Naive thymus-derived CD4-positive, alpha-beta T cell (primary cell): ENCODE measurements at regions of chr22 and their contacts with region 1.

Region 1: GRCh38 chr22:39446295-39446721 is 10.5 kb upstream of the MGAT3 start:
- DNase-seq: no peak
- ATAC-seq: peak; percentile 15
- H3K4me3 ChIP-seq: no peak overlapping the region
- H3K4me3 Mint-ChIP-seq: peak overlapping the region in 7 of 10 donors; percentile 23 to 80 (median 69)
- H3K27ac ChIP-seq: no peak overlapping the region
- H3K27ac Mint-ChIP-seq: peak overlapping the region in 4 of 9 donors; percentile 57 to 87 (median 78)
- H3K4me1 ChIP-seq: peaks cover 5 to 35% of the 10 kb centered on the region in 2 donors
- H3K4me1 Mint-ChIP-seq: peaks cover 17 to 33% (median 24%) of the 10 kb centered on the region in 7 donors
- H3K27me3 ChIP-seq: no peaks in the 10 kb centered on the region
- H3K27me3 Mint-ChIP-seq: no peaks in the 10 kb centered on the region

Region 2: DNA sequence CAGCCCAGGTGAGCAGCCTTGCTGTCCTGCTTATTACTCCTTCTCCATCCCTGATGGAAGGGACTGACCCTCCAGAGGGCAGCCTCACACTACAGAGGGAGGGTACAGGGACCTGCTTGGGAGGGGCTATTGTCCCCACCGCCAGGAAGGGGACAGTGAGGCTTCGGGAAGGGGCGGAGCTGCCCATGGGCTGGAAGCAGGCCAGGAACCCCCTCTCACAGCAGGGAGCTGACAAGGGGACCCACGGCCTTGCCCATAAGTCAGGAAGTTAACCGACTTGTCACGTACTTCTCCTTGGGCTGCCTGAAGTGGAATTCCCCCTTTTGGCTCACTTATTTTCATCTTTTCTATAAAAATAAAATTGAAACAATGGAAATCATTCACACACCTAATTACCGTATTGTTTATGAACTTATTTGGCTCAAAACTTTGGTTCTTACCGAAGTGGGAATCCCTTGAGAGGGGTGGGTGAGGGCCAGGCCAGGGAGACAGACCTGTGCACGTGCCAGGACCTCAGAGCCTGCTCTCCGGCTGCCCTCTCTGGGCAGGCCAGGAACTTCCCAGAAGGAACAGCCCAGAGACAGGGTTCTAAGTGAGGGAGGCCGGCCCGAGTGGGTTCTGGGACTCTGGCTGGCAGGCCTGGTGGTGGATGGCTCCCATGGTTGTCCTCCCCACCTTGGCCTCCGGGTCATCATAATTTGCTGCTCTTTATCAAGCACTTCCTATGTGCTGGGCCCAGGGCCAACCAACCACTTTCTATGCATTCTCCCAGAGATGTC is 16.3 kb after region 1 on chr22:
- CTCF ChIA-PET with region 1: no interaction called
- POLR2A ChIA-PET with region 1: interaction called, 3 read pairs
- intact Hi-C with region 1: loop called in 1 of 2 experiments (anchors 1 kb)
- DNase-seq: no peak
- ATAC-seq: peak; percentile 26
- H3K4me3 ChIP-seq: no peak overlapping the region
- H3K4me3 Mint-ChIP-seq: peak overlapping the region in 1 of 10 donors; percentile 32
- H3K27ac ChIP-seq: no peak overlapping the region
- H3K27ac Mint-ChIP-seq: peak overlapping the region in 1 of 9 donors; percentile 1
- H3K4me1 ChIP-seq: peaks cover 0 to 9% of the 10 kb centered on the region in 2 donors
- H3K4me1 Mint-ChIP-seq: peaks cover 6 to 17% (median 10%) of the 10 kb centered on the region in 7 donors
- H3K27me3 ChIP-seq: peaks cover 0 to 11% of the 10 kb centered on the region in 2 donors
- H3K27me3 Mint-ChIP-seq: peaks cover 16 to 29% (median 25%) of the 10 kb centered on the region in 5 donors